ENCODE measurements at regions of chr11 and their contacts with region 1.

Region 1: GRCh38 chr11:108871152-108871551 is 206.3 kb downstream of the DDX10 start:
- DNase-seq: peak; percentile 56
- H3K4me3 ChIP-seq: no peak overlapping the region
- H3K27ac ChIP-seq: no peak overlapping the region
- H3K4me1 ChIP-seq: peaks cover 15% of the 10 kb centered on the region
- H3K27me3 ChIP-seq: no peaks in the 10 kb centered on the region
- CTCF ChIP-seq: peak; percentile 40 to 59

Region 2: DNA sequence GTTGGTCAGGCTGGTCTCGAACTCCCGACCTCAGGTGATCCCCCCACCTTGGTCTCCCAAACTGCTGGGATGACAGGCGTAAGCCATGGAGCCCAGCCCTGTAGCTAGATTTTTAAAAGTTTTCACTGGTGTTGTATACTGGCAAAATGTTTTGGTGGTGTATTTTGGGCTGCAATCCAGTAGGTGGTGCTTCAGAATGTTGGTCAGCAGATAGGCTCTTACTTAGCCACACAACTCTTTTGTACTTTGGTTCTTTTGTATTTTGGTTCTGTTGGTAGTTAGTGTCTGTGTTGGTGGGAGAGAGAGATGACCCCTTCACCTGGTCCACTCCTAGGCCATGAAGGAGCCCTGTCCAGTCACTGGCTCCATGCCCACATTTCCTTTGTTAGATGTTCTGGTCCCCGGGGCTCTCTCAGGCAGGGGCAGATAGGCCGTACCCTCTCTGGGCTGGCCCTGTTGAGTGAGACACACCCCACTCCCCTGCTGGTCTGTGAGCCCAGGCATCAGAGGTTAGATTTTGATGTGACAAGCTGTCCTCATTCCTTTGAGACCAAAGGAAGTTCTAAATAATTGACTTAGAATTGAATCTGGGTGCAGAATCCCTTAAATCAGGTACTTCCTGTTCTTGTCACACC is 82.5 kb before region 1 on chr11:
- CTCF ChIA-PET with region 1: interaction called, 3 read pairs
- dilution Hi-C with region 1: no loop called
- in situ Hi-C with region 1: no loop called
- intact Hi-C with region 1: loop called (anchors 1 kb)
- DNase-seq: peak; percentile 12
- H3K4me3 ChIP-seq: no peak overlapping the region
- H3K27ac ChIP-seq: no peak overlapping the region
- H3K4me1 ChIP-seq: no peaks in the 10 kb centered on the region
- H3K27me3 ChIP-seq: no peaks in the 10 kb centered on the region
- CTCF ChIP-seq: peak; percentile 35 to 65

Region 3: DNA sequence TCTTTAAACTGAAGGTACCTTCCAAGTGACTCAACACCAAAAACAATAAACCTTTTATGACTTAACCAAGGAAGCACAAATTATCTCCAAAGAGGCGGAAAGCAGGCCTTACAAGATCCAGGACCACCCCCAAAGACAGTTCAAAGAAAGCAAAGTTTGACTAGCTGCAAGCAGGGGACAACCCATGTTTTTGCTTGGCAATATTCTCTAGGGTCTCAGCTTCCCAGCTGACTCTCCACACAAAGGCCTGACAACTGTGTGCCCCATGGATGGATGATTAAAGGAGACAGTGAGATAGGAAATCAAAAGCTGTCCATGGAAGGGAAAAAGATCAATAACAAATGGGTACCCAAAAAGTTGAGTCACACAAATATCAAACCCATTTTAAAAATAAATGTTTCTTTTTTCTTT is 25.9 kb after region 1 on chr11:
- CTCF ChIA-PET with region 1: interaction called, 12 read pairs
- dilution Hi-C with region 1: no loop called
- in situ Hi-C with region 1: no loop called
- intact Hi-C with region 1: no loop called
- DNase-seq: no peak
- H3K4me3 ChIP-seq: no peak overlapping the region
- H3K27ac ChIP-seq: peak overlapping the region; percentile 64
- H3K4me1 ChIP-seq: peaks cover 19% of the 10 kb centered on the region
- H3K27me3 ChIP-seq: no peaks in the 10 kb centered on the region
- CTCF ChIP-seq: no peak

Measured in mammary epithelial cell (primary cell).